Activated naive CD4-positive, alpha-beta T cell treated with anti-CD3 and anti-CD28 coated beads for 36 hours (primary cell): ENCODE measurements at regions of chr9 and their contacts with region 1.

Region 1: GRCh38 chr9:77011973-77012821 is 7.3 kb upstream of the FOXB2 start:
- DNase-seq: peak; percentile 84
- H3K4me3 Mint-ChIP-seq: peak overlapping the region; percentile 36
- H3K27ac Mint-ChIP-seq: no peak overlapping the region
- H3K4me1 Mint-ChIP-seq: peaks cover 16% of the 10 kb centered on the region
- H3K27me3 Mint-ChIP-seq: peaks cover 69% of the 10 kb centered on the region

Region 2: GRCh38 chr9:77022783-77023440 is 10.7 kb after region 1 on chr9:
- CTCF ChIA-PET with region 1: interaction called, 4 read pairs
- intact Hi-C with region 1: loop called (anchors 1 kb)
- DNase-seq: no peak
- H3K4me3 Mint-ChIP-seq: no peak overlapping the region
- H3K27ac Mint-ChIP-seq: no peak overlapping the region
- H3K4me1 Mint-ChIP-seq: peaks cover 34% of the 10 kb centered on the region
- H3K27me3 Mint-ChIP-seq: peaks cover 53% of the 10 kb centered on the region

Region 3: DNA sequence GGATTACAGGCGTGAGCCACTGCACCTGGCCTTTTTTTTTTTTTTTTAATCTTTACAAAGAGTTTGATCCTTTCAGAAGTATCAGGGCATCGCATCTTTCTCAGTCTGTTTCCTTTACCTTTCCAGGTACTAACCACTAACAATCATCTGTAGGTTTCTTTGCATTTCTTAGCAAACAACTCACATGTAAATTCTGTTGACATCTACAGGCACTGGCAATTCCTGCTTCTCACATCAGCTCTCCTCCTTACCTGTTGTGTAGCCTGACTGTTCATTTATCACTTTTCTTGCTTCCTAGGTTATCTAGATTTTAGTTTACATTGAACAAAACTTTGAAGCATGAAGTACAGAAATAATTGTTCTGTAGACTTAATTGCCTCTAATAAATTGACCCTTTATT is 137.7 kb after region 1 on chr9:
- CTCF ChIA-PET with region 1: interaction called, 3 read pairs
- intact Hi-C with region 1: loop called (anchors 1 kb)
- DNase-seq: no peak
- H3K4me3 Mint-ChIP-seq: no peak overlapping the region
- H3K27ac Mint-ChIP-seq: no peak overlapping the region
- H3K4me1 Mint-ChIP-seq: no peaks in the 10 kb centered on the region
- H3K27me3 Mint-ChIP-seq: peaks cover 14% of the 10 kb centered on the region